Gastrocnemius medialis (tissue), 4 donors: ENCODE measurements at regions of chr3 and their contacts with region 1.

Region 1: DNA sequence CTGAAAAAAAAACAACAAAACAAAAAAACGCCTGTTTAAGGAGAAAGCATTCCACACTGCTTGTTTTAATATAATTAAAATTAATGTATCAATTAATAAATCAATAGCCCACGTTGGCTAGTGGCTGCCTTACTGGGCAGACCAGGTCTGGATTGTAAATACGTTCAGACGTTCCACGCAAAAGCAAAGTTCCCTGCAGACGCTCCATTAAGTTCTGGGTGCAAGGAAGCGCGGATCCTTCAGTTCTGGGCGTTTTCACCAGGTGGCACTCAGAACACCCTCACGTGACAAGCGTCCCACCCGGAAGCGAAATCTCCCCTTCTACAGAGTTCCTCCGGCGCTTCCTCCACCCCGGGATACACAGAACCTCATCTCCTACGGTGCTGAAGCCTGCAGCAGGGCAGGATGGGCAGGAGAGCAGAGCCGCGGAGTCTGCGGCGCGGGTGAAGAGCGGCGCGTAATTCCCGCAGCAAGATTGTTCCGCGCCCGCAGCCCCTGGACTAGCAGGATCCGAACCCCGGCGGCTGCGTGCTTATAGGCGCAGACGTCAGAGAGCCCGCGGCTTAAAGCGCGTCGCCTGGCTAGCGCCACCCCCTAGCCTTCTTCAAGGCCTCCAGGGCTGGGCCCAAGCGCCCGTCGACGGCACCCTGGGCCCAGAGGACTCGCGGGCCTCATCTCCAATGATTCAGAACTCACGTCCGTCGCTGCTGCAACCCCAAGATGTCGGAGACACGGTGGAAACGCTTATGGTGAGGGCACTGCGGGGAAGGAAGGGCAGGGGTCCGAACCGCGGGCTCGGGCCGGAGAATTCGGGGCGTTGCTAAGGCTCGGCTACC is at the start of gene SLC25A38:
- DNase-seq: peak; percentile 74 to 76
- ATAC-seq: peak; percentile 76 to 82
- H3K4me3 ChIP-seq: peak within 1 kb of the TSS; percentile 81 to 98 (median 90)
- H3K27ac ChIP-seq: peak within 1 kb of the TSS; percentile 96 to 97 (median 96)
- H3K4me1 ChIP-seq: peaks cover 14 to 20% of the 10 kb centered on the region in 2 donors
- H3K27me3 ChIP-seq: no peaks in the 10 kb centered on the region
- CTCF ChIP-seq: peak in 4 of 5 experiments; percentile 15 to 46 (median 28)
- POLR2A ChIP-seq: peak; percentile 55 to 58
- total RNA-seq, gene SLC25A38: 43.8 to 51.2 (median 48.2) TPM

Region 2: DNA sequence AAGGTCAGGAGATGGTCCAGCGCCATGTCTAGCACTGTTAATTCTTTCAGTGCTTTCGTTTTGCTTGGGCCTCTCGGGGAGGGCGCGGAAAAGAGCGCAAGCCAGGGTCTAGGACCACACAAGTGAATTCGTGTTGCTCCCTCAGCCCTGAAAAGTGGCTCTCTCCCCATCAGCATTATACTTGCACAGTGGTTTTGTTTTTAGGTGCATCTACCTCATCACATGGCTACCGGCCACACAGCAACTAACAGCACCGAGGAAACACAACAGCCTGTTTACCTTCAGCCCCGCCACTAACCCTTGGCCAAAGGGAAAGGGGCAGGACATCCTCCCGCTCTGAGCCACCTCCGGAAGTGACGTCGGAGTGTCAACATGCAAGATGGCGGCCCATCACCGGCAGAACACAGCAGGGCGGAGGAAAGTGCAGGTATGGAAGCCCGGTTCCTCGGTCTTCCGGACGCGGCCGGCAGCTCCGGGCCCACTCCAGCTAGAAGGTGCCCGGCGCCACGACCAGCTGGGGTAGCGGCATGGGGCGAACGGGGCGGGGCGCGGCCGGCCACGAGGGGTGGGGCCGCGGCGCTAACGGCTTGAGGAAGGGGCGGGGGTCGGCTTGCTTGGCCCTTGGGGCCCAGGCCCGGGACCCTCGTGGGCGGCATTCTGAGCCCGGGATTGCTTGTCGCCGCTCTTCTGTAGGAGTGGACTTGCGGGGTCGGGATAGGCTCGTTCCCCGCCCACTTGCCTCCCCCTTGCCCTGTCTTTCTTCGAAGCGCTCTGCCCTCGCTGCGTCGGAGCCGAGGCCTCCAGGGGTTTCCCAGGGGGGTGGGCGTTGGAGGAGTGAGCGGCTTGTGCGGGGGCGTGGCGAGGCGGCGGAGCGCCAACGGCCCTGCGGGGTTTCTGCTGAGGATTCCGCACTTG is 331.4 kb before region 1 on chr3 and contains the starts of genes SCN11A and WDR48:
- in situ Hi-C with region 1: no loop called
- intact Hi-C with region 1: loop called (anchors 5 kb)
- DNase-seq: peak; percentile 92
- ATAC-seq: peak; percentile 99 to 100
- H3K4me3 ChIP-seq: peak within 1 kb of the TSS; percentile 94 to 98 (median 94)
- H3K27ac ChIP-seq: peak within 1 kb of the TSS; percentile 84 to 96 (median 94)
- H3K4me1 ChIP-seq: peaks cover 22% of the 10 kb centered on the region in 2 donors
- H3K27me3 ChIP-seq: no peaks in the 10 kb centered on the region
- CTCF ChIP-seq: no peak
- POLR2A ChIP-seq: peak; percentile 64 to 77
- total RNA-seq, gene SCN11A: 0.04 TPM in 1 of 4 donors, not detected in the others
- total RNA-seq, gene WDR48: 14.8 to 26.5 (median 19.8) TPM

Region 3: DNA sequence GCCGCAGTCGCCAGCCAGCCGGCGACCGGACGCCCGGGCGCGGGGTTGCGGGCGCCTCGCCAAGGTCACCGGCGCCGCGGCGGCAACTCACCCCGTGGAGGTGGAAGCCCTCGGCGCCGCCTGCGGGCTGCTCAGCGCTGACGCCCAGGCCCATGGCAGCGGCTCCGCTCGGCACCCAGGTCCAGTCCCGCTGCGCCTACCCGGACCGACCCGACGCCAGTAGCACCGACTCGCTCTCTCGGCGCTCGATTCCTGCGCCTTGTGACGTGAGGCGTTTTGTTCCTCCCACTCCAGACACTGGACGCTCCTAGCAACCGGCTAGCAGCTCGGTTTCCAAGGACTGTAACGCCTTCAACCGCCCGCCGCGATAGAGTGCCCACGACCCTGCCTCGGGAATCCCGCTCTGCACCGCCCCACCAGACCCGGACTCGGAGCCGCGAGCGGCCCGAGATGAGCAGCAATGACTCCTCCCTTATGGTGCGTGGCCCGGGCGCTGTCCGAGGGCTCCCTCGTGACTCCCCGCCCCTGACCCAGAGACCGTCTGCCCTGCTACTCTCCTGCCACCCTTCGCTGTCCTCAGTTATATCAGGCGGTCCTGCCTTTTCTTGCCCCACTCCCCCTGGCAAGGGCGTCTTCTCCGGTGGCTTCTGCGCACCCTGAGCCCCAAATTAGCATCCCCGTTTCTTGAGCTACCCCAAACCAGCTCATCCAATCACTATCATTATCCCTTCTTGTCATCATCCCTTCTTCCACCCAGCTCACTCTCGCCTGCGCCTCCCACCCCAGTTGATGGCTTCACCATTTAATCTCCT is 275.7 kb before region 1 on chr3 and contains the starts of genes GORASP1 and TTC21A:
- in situ Hi-C with region 1: no loop called
- intact Hi-C with region 1: loop called (anchors 5 kb)
- DNase-seq: peak; percentile 87 to 88
- ATAC-seq: peak; percentile 95
- H3K4me3 ChIP-seq: peak within 1 kb of the TSS; percentile 71 to 95 (median 84)
- H3K27ac ChIP-seq: peak within 1 kb of the TSS; percentile 89 to 99 (median 94)
- H3K4me1 ChIP-seq: peaks cover 37 to 40% of the 10 kb centered on the region in 2 donors
- H3K27me3 ChIP-seq: no peaks in the 10 kb centered on the region
- CTCF ChIP-seq: peak in 1 of 5 experiments; percentile 27
- POLR2A ChIP-seq: peak; percentile 86 to 89
- total RNA-seq, gene GORASP1: 34.3 to 81.9 (median 38.5) TPM
- total RNA-seq, gene TTC21A: 0.33 to 4.3 (median 1.1) TPM

Region 4: DNA sequence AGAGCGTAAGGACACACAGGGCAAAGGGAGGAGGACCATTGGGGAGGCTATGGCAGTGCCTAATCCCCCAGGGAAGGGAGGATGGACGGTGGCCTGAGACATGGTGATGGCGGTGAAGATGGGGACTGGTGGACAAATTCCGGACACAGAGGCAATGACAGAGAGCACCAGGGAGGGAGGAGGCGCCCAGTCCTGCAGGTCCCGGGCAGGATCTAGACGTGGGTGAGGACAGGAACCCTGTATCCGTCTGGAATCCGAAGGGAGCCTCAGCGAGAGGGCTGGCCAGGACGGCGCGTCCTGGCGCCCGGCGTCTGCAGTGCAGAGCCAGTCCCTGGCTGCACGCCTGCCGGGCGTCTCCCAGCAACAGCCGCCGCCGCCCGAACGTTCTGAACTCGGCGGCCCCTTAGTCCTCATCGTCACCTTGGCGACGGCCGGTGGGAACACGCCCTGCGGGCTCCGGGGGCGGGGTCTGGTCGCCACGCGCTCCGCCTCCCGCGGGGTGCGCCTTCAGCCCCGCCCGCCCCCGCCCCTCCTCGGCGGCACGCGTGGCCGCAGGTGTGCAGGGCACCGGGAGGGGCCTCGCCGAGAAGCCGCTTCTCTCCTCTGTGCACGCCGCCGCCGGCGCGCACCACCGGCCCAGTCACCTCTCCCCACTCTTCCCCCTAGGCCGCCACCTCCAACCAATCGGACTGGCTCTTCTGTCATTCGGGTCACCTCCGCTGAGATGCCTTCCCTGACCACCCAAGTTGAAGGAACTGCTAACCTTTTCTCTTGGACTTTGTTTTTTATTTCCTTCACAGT is 202.5 kb before region 1 on chr3:
- in situ Hi-C with region 1: no loop called
- intact Hi-C with region 1: loop called (anchors 5 kb)
- DNase-seq: peak; percentile 85 to 93
- ATAC-seq: peak; percentile 68 to 70
- H3K4me3 ChIP-seq: peak overlapping the region; percentile 44 to 55 (median 47)
- H3K27ac ChIP-seq: peak overlapping the region; percentile 86 to 100 (median 94)
- H3K4me1 ChIP-seq: peaks cover 47 to 56% of the 10 kb centered on the region in 2 donors
- H3K27me3 ChIP-seq: no peaks in the 10 kb centered on the region
- CTCF ChIP-seq: peak; percentile 12 to 45 (median 31)
- POLR2A ChIP-seq: peak; percentile 47 to 57

Region 5: DNA sequence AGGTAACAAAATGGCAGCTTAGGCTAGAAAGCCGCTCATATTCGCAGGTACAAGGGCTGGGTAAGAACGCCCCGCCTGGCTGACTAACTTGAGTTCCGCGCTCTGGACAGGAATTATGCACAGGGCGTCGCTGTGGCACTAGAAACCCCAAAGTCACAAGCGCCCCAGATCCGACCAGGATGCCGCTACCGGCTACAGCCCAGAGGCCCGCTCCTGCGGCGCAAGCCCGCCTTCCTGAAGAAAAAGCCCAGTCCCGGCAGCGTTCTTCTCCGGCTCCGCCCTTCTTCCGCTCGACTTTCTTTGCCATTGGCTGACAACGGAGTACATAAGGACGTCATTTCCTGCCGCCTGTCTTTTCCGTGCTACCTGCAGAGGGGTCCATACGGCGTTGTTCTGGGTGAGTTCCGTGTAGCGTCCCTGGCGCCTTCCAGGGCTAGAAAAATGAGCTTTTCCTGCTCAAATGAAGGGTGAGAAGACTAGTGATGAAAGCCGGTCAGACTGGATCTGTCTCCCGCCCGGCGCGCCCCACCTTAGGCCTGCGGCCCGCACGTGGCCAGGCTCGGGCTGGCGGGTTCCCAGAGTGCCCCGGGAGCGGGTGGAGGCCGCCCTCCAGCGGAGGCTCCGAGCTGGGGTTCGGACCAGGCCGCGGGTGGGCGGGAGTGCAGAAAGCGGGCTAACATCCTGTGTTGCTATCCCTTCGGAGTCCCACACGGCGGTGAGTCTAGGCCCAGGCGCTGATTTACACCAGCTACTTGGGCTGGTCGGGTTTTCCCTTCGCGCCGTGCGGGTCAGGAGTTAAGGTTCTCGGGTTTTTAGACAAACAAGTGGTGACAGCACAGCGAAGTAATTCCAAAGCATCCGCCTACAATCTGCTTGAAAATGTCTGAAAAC is 23.4 kb after region 1 on chr3 and contains the start of gene RPSA:
- in situ Hi-C with region 1: no loop called
- intact Hi-C with region 1: loop called (anchors 1 kb)
- DNase-seq: peak; percentile 93 to 94
- ATAC-seq: peak; percentile 99 to 100
- H3K4me3 ChIP-seq: peak within 1 kb of the TSS; percentile 75 to 87 (median 83)
- H3K27ac ChIP-seq: peak within 1 kb of the TSS; percentile 83 to 96 (median 88)
- H3K4me1 ChIP-seq: peaks cover 17 to 23% of the 10 kb centered on the region in 2 donors
- H3K27me3 ChIP-seq: no peaks in the 10 kb centered on the region
- CTCF ChIP-seq: peak in 4 of 5 experiments; percentile 44 to 54 (median 54)
- POLR2A ChIP-seq: peak; percentile 95 to 97
- total RNA-seq, gene RPSA: 644 to 857 (median 730) TPM